GM10248 (cell line): ENCODE measurements at regions of chr3 and their contacts with region 1.

Region 1: GRCh38 chr3:13895155-13896105 is 15.6 kb upstream of the WNT7A start:
- DNase-seq: peak; percentile 92
- CTCF ChIP-seq: no peak

Region 2: DNA sequence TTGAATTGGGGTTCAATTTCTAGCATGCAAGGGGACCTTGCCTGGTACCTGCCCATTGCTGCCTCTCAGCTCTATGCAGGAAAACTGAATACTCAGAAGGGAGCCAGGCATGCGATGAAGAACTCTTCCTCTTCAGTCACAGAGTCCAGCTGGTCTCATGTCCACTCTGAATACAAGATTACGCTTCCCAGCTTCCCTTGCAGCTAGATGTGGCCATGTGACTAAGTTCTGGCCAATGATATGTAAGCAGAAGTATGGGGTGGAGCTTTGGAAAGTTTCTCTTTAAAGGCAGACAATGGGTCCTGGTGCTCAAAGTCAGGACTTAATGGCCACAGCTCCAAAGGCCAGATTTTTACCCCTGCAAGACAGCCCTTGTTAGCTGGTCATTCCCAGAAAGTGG is 24.5 kb before region 1 on chr3:
- CTCF ChIA-PET with region 1: no interaction called
- POLR2A ChIA-PET with region 1: no interaction called
- DNase-seq: no peak
- CTCF ChIP-seq: no peak

Region 3: GRCh38 chr3:14016885-14017475 is 121.5 kb after region 1 on chr3:
- CTCF ChIA-PET with region 1: no interaction called
- POLR2A ChIA-PET with region 1: no interaction called
- DNase-seq: no peak
- CTCF ChIP-seq: no peak

Region 4: DNA sequence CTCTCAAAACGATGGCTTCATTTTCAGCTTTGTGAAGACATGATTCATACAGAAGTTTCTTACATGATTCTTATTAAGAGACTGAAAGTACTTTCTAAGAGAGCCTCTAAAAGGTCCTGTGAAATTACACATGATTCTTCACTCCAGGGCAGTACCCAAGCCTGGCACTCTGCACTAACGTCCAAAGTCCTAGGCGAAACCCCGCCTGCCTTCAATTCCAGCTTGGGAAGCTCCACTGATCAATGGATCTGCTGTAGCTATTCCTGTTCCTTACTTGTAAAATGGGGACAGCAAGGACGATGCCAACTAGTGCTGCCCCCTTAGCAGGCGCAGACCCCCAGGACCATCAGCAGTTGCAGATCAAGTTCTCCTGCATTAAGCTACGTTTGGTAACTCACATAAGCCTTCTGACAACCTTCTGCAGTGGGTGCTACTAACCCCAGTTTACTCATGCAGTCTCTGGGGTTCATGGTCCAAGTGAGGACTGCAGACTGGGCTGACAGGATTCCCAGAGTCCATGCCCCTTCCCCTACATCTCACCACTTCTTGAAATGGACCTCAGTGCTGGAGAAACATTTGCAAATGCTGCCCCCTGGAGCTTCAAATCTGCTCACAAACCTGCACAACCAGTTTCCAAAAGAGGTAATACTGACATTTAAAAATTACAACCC is 218.7 kb after region 1 on chr3:
- CTCF ChIA-PET with region 1: interaction called, 17 read pairs
- POLR2A ChIA-PET with region 1: no interaction called
- DNase-seq: no peak
- CTCF ChIP-seq: no peak

Region 5: GRCh38 chr3:14467814-14468620 is 572.6 kb after region 1 on chr3:
- CTCF ChIA-PET with region 1: interaction called, 10 read pairs
- POLR2A ChIA-PET with region 1: no interaction called
- DNase-seq: peak; percentile 81
- CTCF ChIP-seq: peak; percentile 83